HEK293 (cell line): ENCODE measurements at regions of chr20 and their contacts with region 1.

Region 1: GRCh38 chr20:50189681-50190582 is 698 bp upstream of the CEBPB start:
- H3K4me3 ChIP-seq: peak overlapping the region; percentile 61
- H3K27ac ChIP-seq: no peak overlapping the region; the same call in 1 of the 2 replicates
- H3K4me1 ChIP-seq: peaks cover 10% of the 10 kb centered on the region
- CTCF ChIP-seq: peak; percentile 63; the same call in 1 of the 2 replicates

Region 2: DNA sequence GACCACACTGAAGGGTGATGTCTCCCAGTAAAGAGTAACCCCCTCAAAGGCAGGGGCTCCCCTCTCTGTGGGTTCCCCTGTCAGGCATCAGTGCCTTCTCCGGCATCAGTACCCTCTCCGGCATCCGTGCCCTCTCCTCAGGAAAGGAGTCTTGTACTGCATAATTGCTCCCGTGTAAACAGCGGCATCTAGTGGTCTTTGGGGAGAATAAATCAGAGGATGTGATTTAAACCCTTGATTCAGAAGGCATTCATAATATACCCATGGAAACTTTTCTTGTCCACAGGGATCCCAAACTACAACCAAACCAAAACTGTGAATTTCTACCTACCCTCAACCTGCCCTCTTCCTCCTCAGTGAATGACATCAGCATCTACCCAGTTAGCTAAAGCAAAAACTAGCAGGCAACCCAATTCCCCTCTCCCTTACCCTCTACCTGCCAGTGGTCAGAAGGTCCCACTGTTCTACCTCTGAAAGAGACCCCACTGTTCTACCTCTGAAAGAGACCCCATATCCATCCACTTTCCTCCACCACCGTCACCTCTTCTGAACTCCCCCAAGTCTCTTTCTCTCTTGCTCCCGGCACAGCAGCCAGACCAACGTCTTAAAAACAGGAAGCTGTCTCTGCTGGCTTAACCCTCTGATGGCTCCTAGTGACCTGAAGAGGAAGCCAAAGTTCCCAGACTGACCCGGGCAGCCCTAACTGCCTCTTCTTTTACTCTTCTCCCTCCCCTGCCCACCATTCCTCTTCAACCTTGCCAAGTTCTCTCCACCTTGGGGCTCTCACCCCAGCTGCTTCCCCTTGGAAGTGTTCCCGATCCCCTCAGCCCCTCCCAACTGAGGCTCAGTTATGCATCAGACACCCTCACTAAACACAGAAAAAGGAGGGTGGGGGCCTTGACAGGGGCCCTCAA is 104.2 kb before region 1 on chr20:
- CTCF ChIA-PET with region 1: no interaction called
- POLR2A ChIA-PET with region 1: no interaction called
- H3K4me3 ChIP-seq: no peak overlapping the region
- H3K27ac ChIP-seq: no peak overlapping the region
- H3K4me1 ChIP-seq: peaks cover 8% of the 10 kb centered on the region
- CTCF ChIP-seq: peak; percentile 79

Region 3: GRCh38 chr20:50303573-50304501 is 113.9 kb after region 1 on chr20:
- CTCF ChIA-PET with region 1: no interaction called
- POLR2A ChIA-PET with region 1: no interaction called
- H3K4me3 ChIP-seq: no peak overlapping the region
- H3K27ac ChIP-seq: no peak overlapping the region
- H3K4me1 ChIP-seq: no peaks in the 10 kb centered on the region
- CTCF ChIP-seq: no peak

Region 4: GRCh38 chr20:50460460-50461267 is 270.7 kb after region 1 on chr20:
- CTCF ChIA-PET with region 1: interaction called, 106 read pairs
- POLR2A ChIA-PET with region 1: interaction called, 7 read pairs
- H3K4me3 ChIP-seq: no peak overlapping the region
- H3K27ac ChIP-seq: no peak overlapping the region
- H3K4me1 ChIP-seq: no peaks in the 10 kb centered on the region; the same call in 1 of the 2 replicates
- CTCF ChIP-seq: peak; percentile 68